K562 (cell line): ENCODE measurements at regions of chr19 and their contacts with region 1.

Region 1: DNA sequence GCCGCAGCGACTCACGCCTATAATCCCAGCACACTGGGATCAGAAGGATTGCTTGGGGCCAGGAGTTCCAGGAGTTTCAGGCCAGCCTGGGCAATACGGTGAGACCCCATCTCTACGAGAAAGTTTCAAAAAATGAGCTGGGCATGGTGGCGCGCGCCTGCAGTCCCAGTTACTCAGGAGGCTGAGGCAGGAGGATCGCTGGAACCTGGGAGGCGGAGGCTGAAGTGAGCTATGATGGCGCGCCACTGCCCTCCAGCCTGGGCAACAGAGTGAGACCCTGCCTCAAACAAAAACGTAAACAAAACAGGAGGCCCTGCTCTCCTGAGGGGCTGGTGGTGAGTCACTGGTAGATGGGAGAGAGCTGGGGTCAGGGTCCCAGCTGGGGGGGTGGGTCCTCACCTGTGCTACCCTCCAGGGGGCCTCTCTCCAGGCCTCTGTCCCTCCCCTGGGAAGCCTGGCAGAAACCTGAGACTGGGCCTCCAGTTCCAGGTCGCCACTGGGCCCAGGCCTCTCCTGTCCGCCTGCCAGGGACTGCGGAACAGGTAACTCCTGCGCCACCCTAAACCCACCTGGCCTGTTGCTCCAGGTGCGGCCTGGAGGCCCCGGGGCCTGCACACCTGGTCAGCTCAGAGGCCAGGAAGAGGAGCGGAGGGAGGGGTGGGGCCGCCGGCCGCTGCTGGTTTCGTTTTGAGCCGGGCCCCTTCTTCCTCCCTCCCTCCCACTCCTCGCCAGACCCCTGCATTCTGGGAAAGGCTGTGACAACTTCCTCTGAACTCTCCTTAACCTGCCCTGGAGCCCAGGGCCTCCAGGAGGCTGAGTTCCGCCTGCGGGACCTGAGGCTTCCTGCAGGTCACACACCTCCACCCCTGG is 17.2 kb upstream of the ZBTB7A start:
- DNase-seq: peak in 2 of 4 experiments; percentile 42 to 62
- ATAC-seq: peak; percentile 48
- H3K4me3 ChIP-seq: no peak overlapping the region
- H3K27ac ChIP-seq: peak overlapping the region; percentile 36; the same call in 1 of the 3 replicates
- H3K4me1 ChIP-seq: peaks cover 3 to 64% of the 10 kb centered on the region in 2 experiments; a peak in 4 of 5 replicates
- H3K27me3 ChIP-seq: no peaks in the 10 kb centered on the region
- CTCF ChIP-seq: no peak
- EP300 ChIP-seq: no peak
- POLR2A ChIP-seq: no peak
- RAD21 ChIP-seq: no peak

Region 2: DNA sequence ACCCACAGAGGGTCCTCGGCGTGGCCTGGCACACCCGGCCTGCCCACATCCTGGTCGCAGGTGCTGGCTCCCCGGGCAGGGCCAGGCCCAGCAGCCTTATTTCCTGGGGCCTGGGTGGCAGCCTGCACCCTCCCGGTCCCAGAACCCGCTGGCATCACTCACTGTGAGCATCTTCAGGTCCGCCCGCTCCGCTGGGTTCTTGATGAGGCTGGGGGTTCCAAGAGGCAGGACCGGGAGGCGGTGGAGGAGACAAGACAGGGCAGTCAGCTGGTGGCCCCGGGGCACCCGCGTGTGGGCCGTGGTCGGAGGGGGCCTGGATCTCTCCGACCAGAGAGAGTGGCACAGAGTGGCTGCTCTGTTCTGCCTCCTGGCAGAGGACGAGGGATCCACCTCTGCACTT is 10.4 kb after region 1 on chr19:
- CTCF ChIA-PET with region 1: no interaction called
- POLR2A ChIA-PET with region 1: interaction called, 13 read pairs
- in situ Hi-C with region 1: no loop called
- intact Hi-C with region 1: no loop called
- DNase-seq: no peak
- ATAC-seq: no peak
- H3K4me3 ChIP-seq: no peak overlapping the region
- H3K27ac ChIP-seq: no peak overlapping the region
- H3K4me1 ChIP-seq: peaks cover under 1 to 38% of the 10 kb centered on the region in 2 experiments; a peak in 4 of 5 replicates
- H3K27me3 ChIP-seq: no peaks in the 10 kb centered on the region
- CTCF ChIP-seq: no peak
- EP300 ChIP-seq: no peak
- POLR2A ChIP-seq: no peak
- RAD21 ChIP-seq: no peak